Left cardiac atrium (tissue), 4 donors: ENCODE measurements at regions of chr15 and their contacts with region 1.

Region 1: GRCh38 chr15:85831415-85832113 is 36.8 kb upstream of the KLHL25 start:
- DNase-seq: peak; percentile 76
- ATAC-seq: peak; percentile 91 to 93

Region 2: GRCh38 chr15:85318048-85318731 is 513.4 kb before region 1 on chr15:
- intact Hi-C with region 1: loop called in 1 of 2 experiments (anchors 10 kb)
- DNase-seq: no peak
- ATAC-seq: peak in 1 of 2 donors; percentile 29

Region 3: GRCh38 chr15:85730001-85730820 is 101.4 kb before region 1 on chr15:
- intact Hi-C with region 1: loop called in 1 of 2 experiments (anchors 2 kb)
- DNase-seq: no peak
- ATAC-seq: peak; percentile 61 to 74

Region 4: DNA sequence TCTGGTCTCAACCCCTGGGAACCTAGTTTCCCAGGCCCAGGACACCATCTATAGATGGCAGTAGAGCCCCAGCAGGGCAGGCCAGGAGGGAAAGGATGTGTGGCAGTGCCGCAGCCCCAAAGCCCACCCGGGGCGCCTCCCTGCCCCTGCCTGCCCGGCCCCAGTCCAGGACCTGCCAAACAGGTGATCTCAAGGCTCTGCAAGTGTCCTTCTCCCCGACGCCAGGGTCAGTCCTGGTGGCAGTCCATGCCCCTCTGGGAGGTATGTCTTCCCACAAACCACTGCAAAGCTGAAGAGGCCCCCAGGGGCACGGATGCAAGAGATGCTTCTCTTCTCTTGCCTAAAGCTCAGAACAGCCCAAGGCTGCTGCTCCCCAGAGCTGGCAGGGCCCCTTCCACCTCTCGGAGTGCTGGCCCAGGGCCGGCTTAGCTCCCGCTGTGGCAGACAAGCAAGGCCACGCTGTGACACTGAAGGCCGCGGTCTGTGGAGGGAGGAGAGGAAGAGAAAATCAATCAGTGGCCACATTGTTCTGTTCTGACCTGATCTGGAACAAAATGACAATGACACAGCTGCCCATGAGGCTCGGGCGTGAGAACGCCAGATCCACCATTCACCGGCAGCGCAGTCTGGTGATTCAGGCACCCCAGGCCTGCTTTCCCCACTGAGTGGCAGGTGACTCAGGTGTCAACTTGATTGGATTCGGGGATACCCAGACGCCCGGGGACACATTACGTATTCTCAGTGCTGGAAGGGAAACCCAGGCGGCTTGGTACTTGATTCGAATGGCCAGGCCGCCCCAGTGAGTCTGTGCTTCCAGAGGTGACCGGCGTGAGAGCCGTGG is 70.8 kb before region 1 on chr15:
- intact Hi-C with region 1: loop called in 1 of 2 experiments (anchors 10 kb)
- DNase-seq: no peak
- ATAC-seq: no peak

Region 5: GRCh38 chr15:86089422-86089821 is 257.9 kb after region 1 on chr15:
- intact Hi-C with region 1: no loop called
- DNase-seq: no peak
- ATAC-seq: no peak